Activated naive CD4-positive, alpha-beta T cell treated with anti-CD3 and anti-CD28 coated beads for 36 hours (primary cell): ENCODE measurements at regions of chr2 and their contacts with region 1.

Region 1: DNA sequence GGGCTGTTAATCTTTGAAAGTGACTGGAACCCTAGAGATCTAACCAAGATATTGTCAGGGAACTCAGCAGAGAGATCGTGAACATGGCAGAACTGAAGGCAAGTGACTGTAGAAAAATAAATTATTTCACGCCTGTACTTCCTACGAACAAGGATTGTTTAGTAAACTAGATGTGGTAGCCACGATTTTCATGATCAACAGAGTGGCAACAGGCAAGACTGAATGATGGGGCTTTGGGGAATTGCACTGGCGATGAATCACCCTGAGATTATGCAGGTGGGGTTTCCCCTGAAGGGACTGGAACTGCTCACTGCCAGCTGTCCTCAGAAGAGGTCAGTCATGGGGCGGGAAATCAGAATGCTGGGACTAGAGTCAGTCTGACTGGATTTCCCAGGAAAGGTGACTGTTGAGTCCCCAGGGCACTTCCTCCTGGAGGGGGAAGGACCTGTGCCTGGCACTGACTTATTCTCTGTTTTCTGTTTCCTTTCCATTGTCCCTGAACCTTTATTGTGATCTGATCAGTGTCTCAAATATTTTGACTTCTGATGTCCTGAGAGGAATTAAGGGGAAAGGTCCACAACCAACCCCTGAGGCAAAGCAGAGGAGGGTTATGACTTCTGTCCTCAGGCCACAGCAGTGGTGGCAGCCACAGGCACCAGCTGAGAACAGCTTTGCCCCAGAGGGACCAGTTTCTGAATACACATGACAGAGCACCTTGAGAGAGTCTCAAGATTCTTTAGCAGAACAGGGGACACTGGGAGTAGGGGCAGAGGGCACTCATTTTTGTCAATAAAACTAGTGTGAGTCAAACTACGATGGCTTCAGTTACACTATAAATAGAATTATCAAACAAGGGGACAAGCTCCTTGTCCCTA is 70.0 kb downstream of the NAB1 start:
- DNase-seq: peak; percentile 93
- H3K4me3 Mint-ChIP-seq: peak overlapping the region; percentile 0
- H3K27ac Mint-ChIP-seq: peak overlapping the region; percentile 60
- H3K4me1 Mint-ChIP-seq: peaks cover 65% of the 10 kb centered on the region
- H3K27me3 Mint-ChIP-seq: no peaks in the 10 kb centered on the region

Region 2: GRCh38 chr2:190319555-190320498 is 399.1 kb before region 1 on chr2 and contains the start of gene HIBCH:
- CTCF ChIA-PET with region 1: no interaction called
- intact Hi-C with region 1: loop called (anchors 2 kb)
- DNase-seq: peak; percentile 94
- H3K4me3 Mint-ChIP-seq: peak within 1 kb of the TSS; percentile 91
- H3K27ac Mint-ChIP-seq: peak within 1 kb of the TSS; percentile 88
- H3K4me1 Mint-ChIP-seq: peaks cover 39% of the 10 kb centered on the region
- H3K27me3 Mint-ChIP-seq: no peaks in the 10 kb centered on the region
- total RNA-seq, gene HIBCH: 19.2 TPM

Region 3: DNA sequence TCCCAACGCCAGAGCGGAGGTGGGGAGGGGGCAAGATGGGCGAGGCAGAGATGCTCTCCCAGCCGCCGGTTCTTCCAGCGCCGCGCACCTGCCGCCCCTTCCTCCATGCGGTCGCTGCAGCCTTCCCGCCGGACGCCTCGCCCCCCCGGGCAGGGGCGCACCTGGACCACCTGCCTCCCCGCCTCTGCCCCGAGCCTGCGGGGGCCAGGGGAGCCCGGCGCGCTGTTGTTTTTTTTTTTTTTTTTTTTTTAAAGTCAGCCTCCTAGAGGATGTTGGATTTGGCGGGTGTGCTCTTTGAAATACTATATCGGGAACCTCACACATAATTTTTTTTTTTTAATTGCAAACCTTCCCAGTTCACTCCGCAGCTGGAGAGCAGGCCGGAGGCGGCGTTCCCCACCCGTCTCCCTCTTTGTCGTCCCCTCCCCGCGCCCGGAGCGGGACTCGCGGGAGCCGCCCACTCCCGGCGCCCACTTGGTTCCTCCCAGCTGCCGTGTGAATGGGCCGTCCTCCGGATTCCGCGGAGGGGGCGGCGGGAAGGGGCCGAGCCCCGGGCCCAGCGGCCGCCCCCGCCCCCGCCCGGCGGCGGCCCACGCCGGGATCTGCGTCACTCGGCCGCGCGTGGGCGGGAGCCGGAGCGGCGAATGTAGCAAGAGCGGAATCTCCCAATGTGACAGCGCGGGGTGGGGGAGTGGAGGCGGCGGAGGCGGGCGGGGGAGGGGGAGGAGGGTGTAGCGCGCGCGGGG is 70.4 kb before region 1 on chr2:
- CTCF ChIA-PET with region 1: no interaction called
- intact Hi-C with region 1: loop called (anchors 1 kb)
- DNase-seq: peak; percentile 81
- H3K4me3 Mint-ChIP-seq: peak overlapping the region; percentile 68
- H3K27ac Mint-ChIP-seq: peak overlapping the region; percentile 76
- H3K4me1 Mint-ChIP-seq: peaks cover 43% of the 10 kb centered on the region
- H3K27me3 Mint-ChIP-seq: no peaks in the 10 kb centered on the region

Region 4: DNA sequence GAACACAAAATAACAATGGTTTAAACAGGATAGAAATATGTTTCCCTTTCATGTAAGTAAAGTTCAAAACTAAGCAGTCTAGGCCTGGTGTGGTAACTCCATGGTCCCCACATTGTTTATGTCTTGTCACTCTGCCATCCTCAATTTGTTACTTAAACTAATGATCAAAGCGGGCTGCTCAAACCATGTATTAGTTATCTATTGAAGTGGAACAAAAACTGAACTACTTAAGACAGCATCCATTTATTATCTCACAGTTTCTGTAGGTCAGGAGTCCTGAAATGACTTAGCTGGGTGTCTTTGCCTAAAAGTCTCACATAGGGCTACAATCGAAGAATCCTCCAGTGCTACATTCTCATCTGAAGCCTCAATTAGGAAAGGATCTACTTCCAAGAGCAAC is 21.6 kb after region 1 on chr2:
- CTCF ChIA-PET with region 1: no interaction called
- intact Hi-C with region 1: no loop called
- DNase-seq: no peak
- H3K4me3 Mint-ChIP-seq: no peak overlapping the region
- H3K27ac Mint-ChIP-seq: no peak overlapping the region
- H3K4me1 Mint-ChIP-seq: peaks cover 22% of the 10 kb centered on the region
- H3K27me3 Mint-ChIP-seq: no peaks in the 10 kb centered on the region

Region 5: GRCh38 chr2:190763901-190764514 is 45.1 kb after region 1 on chr2:
- CTCF ChIA-PET with region 1: interaction called, 3 read pairs
- intact Hi-C with region 1: loop called (anchors 1 kb)
- DNase-seq: peak; percentile 78
- H3K4me3 Mint-ChIP-seq: no peak overlapping the region
- H3K27ac Mint-ChIP-seq: peak overlapping the region; percentile 7
- H3K4me1 Mint-ChIP-seq: peaks cover 56% of the 10 kb centered on the region
- H3K27me3 Mint-ChIP-seq: no peaks in the 10 kb centered on the region

Region 6: DNA sequence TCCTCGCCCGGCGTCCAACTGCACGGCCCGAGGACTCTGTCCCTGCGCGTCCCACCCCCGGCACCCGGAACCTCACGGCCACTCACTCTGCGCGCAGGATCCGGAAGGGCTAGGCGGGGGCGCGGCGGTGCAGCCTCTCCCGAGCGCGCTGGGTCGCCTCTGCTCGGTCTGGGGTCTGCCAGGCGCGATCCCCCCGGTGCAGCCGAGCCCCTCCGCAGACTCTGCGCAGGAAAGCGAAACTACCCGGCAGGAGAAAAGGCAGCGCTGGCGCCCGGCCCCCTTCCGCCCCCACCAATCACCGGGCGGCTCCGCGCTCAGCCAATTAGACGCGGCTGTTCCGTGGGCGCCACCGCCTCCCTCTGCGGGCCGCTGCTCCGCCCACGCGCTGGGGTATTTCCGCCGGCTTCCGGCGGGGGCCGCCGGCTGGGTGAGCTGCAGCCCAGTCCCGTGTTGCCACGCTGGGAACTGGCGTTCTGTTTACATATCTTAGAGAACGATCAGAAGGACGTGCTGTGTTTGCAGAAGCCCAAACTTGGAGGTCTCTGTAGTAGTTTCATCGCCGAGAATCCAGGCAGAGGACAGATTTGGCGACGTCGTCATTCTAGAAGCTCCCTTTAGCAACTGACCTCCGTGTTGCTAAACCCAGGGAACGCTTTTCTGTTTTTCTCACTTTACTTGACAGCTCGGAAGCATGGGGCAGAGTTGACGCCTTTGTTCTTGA is 295.2 kb after region 1 on chr2 and contains the start of gene STAT1:
- CTCF ChIA-PET with region 1: no interaction called
- intact Hi-C with region 1: loop called (anchors 2 kb)
- DNase-seq: peak; percentile 95
- H3K4me3 Mint-ChIP-seq: no peak within 1 kb of the TSS
- H3K27ac Mint-ChIP-seq: no peak within 1 kb of the TSS
- H3K4me1 Mint-ChIP-seq: peaks cover 39% of the 10 kb centered on the region
- H3K27me3 Mint-ChIP-seq: no peaks in the 10 kb centered on the region
- total RNA-seq, gene STAT1: 376 to 402 TPM

Region 7: GRCh38 chr2:191066197-191066918 is 347.5 kb after region 1 on chr2:
- CTCF ChIA-PET with region 1: no interaction called
- intact Hi-C with region 1: no loop called
- DNase-seq: peak; percentile 41
- H3K4me3 Mint-ChIP-seq: peak overlapping the region; percentile 25
- H3K27ac Mint-ChIP-seq: peak overlapping the region; percentile 76
- H3K4me1 Mint-ChIP-seq: peaks cover 77% of the 10 kb centered on the region
- H3K27me3 Mint-ChIP-seq: no peaks in the 10 kb centered on the region

Region 8: GRCh38 chr2:191189112-191189635 is 470.3 kb after region 1 on chr2:
- CTCF ChIA-PET with region 1: no interaction called
- intact Hi-C with region 1: loop called (anchors 1 kb)
- DNase-seq: no peak
- H3K4me3 Mint-ChIP-seq: no peak overlapping the region
- H3K27ac Mint-ChIP-seq: peak overlapping the region; percentile 68
- H3K4me1 Mint-ChIP-seq: peaks cover 73% of the 10 kb centered on the region
- H3K27me3 Mint-ChIP-seq: no peaks in the 10 kb centered on the region